ENCODE measurements at regions of chr2 and their contacts with region 1.

Region 1: GRCh38 chr2:120174963-120175581 is 48.1 kb downstream of the TMEM185B start:
- DNase-seq: no peak
- H3K4me3 Mint-ChIP-seq: no peak overlapping the region
- H3K27ac Mint-ChIP-seq: no peak overlapping the region
- H3K4me1 Mint-ChIP-seq: peaks cover 44% of the 10 kb centered on the region
- H3K27me3 Mint-ChIP-seq: no peaks in the 10 kb centered on the region

Region 2: GRCh38 chr2:119641562-119642258 is 533.4 kb before region 1 on chr2:
- CTCF ChIA-PET with region 1: interaction called, 45 read pairs
- POLR2A ChIA-PET with region 1: no interaction called
- intact Hi-C with region 1: loop called (anchors 1 kb)
- DNase-seq: peak; percentile 84
- H3K4me3 Mint-ChIP-seq: no peak overlapping the region
- H3K27ac Mint-ChIP-seq: no peak overlapping the region
- H3K4me1 Mint-ChIP-seq: no peaks in the 10 kb centered on the region
- H3K27me3 Mint-ChIP-seq: peaks cover 3% of the 10 kb centered on the region

Region 3: GRCh38 chr2:119718501-119719260 is 456.4 kb before region 1 on chr2:
- CTCF ChIA-PET with region 1: interaction called, 10 read pairs
- POLR2A ChIA-PET with region 1: no interaction called
- intact Hi-C with region 1: no loop called
- DNase-seq: peak; percentile 33
- H3K4me3 Mint-ChIP-seq: no peak overlapping the region
- H3K27ac Mint-ChIP-seq: peak overlapping the region; percentile 61
- H3K4me1 Mint-ChIP-seq: peaks cover 14% of the 10 kb centered on the region
- H3K27me3 Mint-ChIP-seq: no peaks in the 10 kb centered on the region

Region 4: GRCh38 chr2:119826370-119826961 is 348.6 kb before region 1 on chr2:
- CTCF ChIA-PET with region 1: interaction called, 13 read pairs
- POLR2A ChIA-PET with region 1: no interaction called
- intact Hi-C with region 1: loop called (anchors 2 kb)
- DNase-seq: peak; percentile 57
- H3K4me3 Mint-ChIP-seq: no peak overlapping the region
- H3K27ac Mint-ChIP-seq: no peak overlapping the region
- H3K4me1 Mint-ChIP-seq: peaks cover 42% of the 10 kb centered on the region
- H3K27me3 Mint-ChIP-seq: no peaks in the 10 kb centered on the region

Region 5: DNA sequence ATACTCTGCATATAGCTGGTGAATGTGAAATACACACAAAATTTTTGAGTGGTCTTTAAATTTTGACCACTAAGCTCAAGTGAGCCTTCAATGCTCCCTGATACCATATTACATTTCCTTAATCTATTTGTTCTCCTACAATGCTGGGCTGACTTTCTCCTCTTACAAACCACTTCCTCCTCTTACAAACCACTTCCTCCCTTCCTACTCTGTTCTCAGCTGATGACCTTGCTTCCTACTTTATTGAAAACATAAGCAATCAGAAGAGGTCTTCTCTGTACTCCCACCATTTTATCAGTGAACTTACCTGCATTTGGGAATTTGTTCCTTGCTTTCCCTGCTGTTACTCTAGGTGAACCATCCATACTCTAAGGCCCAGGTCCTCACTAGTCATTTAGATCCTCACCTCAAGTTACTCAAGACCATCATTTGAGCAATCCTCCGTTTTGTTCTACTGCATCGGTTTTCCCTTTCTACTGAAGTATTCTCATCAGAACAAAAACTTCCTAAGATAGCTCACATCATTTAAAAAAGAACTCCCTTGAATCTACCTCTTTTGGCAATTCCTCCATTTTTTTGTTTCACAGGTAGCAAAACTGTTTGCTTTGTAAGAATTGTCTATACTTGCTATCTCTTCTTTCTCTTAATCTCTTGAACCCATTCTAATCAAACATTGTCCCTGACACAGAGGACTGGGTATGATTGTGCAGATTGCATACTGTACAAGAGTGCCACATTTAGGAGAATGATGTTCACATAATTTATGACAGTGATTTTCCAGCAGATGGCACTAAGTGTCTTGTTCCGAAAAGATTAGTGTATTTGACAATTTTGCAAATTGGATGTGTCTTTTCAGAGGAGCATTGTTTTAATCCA is 65.6 kb before region 1 on chr2:
- CTCF ChIA-PET with region 1: interaction called, 82 read pairs
- POLR2A ChIA-PET with region 1: no interaction called
- intact Hi-C with region 1: loop called (anchors 1 kb)
- DNase-seq: no peak
- H3K4me3 Mint-ChIP-seq: no peak overlapping the region
- H3K27ac Mint-ChIP-seq: peak overlapping the region; percentile 42
- H3K4me1 Mint-ChIP-seq: peaks cover 17% of the 10 kb centered on the region
- H3K27me3 Mint-ChIP-seq: no peaks in the 10 kb centered on the region

Region 6: GRCh38 chr2:120231974-120232635 is 57.0 kb after region 1 on chr2:
- CTCF ChIA-PET with region 1: interaction called, 24 read pairs
- POLR2A ChIA-PET with region 1: interaction called, 4 read pairs
- intact Hi-C with region 1: loop called (anchors 2 kb)
- DNase-seq: peak; percentile 85
- H3K4me3 Mint-ChIP-seq: peak overlapping the region; percentile 82
- H3K27ac Mint-ChIP-seq: peak overlapping the region; percentile 96
- H3K4me1 Mint-ChIP-seq: peaks cover 40% of the 10 kb centered on the region
- H3K27me3 Mint-ChIP-seq: no peaks in the 10 kb centered on the region

Region 7: DNA sequence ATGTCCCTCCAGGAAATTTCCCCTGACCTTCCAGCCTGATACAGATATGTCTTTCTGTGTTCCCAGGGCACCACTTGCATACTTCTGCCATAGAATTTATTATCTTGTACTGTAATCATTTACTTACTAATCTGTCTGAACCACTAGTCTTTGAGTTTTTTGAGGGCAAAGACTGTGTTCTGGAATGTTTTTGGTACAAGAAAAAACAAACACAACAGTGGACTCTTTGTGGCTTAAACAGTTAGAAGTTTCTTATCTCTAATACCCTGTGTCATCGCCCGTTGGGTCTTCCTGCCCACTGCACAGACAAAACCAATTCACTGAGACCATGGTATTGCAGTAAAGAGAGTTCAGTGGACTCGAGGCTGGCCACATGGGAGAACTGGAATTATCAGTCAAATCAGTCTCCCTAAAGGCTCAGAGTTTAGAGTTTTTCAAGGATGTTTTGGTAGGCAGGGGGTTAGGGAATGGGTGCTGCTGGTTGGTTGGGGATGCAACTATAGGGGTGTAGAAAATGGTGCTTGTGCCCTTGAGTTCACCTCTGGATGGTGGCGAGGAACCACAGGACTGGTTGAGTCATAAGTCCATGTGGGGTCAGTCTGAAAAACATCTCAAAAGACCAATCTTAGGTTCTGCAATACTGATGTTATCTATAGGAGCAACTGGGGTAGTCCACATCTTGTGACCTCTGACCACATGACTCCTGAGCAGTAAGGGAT is 97.8 kb after region 1 on chr2:
- CTCF ChIA-PET with region 1: no interaction called
- POLR2A ChIA-PET with region 1: no interaction called
- intact Hi-C with region 1: no loop called
- DNase-seq: no peak
- H3K4me3 Mint-ChIP-seq: no peak overlapping the region
- H3K27ac Mint-ChIP-seq: no peak overlapping the region
- H3K4me1 Mint-ChIP-seq: peaks cover 19% of the 10 kb centered on the region
- H3K27me3 Mint-ChIP-seq: no peaks in the 10 kb centered on the region

Region 8: GRCh38 chr2:120312861-120313694 is 138.0 kb after region 1 on chr2:
- CTCF ChIA-PET with region 1: interaction called, 86 read pairs
- POLR2A ChIA-PET with region 1: interaction called, 5 read pairs
- intact Hi-C with region 1: loop called (anchors 1 kb)
- DNase-seq: peak; percentile 87
- H3K4me3 Mint-ChIP-seq: peak overlapping the region; percentile 56
- H3K27ac Mint-ChIP-seq: no peak overlapping the region
- H3K4me1 Mint-ChIP-seq: peaks cover 22% of the 10 kb centered on the region
- H3K27me3 Mint-ChIP-seq: no peaks in the 10 kb centered on the region

Region 9: GRCh38 chr2:120926463-120927264 is 751.6 kb after region 1 on chr2:
- CTCF ChIA-PET with region 1: no interaction called
- POLR2A ChIA-PET with region 1: no interaction called
- intact Hi-C with region 1: no loop called
- DNase-seq: no peak
- H3K4me3 Mint-ChIP-seq: no peak overlapping the region
- H3K27ac Mint-ChIP-seq: no peak overlapping the region
- H3K4me1 Mint-ChIP-seq: no peaks in the 10 kb centered on the region
- H3K27me3 Mint-ChIP-seq: no peaks in the 10 kb centered on the region